ENCODE measurements at regions of chr20 and their contacts with region 1.

Region 1: DNA sequence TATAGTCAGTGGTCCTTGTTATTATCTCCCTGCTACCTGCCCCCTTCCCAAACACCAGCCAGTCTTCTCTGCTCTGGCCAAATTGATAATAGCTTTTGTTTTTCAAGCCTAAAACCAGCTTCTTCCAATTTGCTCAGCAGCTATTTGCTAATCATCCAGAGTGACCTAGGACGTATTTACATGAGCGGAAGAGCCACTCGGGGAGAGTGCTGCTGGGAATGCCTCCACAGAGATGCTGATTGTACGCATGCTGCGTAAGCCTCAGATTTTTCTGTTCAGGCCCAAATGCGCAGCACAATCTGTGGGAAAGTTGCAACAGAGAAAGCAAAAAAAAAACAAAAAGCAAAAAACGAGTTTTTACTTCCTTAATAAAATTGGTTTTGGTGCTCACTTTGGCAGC is 24.4 kb upstream of the ID1 start:
- DNase-seq: no peak
- H3K4me3 ChIP-seq: no peak overlapping the region
- H3K4me3 Mint-ChIP-seq: no peak overlapping the region
- H3K27ac Mint-ChIP-seq: peak overlapping the region; percentile 4
- H3K4me1 ChIP-seq: no peaks in the 10 kb centered on the region
- H3K4me1 Mint-ChIP-seq: peaks cover 14% of the 10 kb centered on the region
- H3K27me3 ChIP-seq: no peaks in the 10 kb centered on the region
- H3K27me3 Mint-ChIP-seq: no peaks in the 10 kb centered on the region
- CTCF ChIP-seq: no peak

Region 2: GRCh38 chr20:31368301-31368700 is 212.4 kb before region 1 on chr20 and contains the start of gene DEFB118:
- CTCF ChIA-PET with region 1: no interaction called
- POLR2A ChIA-PET with region 1: no interaction called
- intact Hi-C with region 1: no loop called
- DNase-seq: no peak
- H3K4me3 ChIP-seq: no peak within 1 kb of the TSS
- H3K4me3 Mint-ChIP-seq: no peak within 1 kb of the TSS
- H3K27ac Mint-ChIP-seq: no peak within 1 kb of the TSS
- H3K4me1 ChIP-seq: no peaks in the 10 kb centered on the region
- H3K4me1 Mint-ChIP-seq: no peaks in the 10 kb centered on the region
- H3K27me3 ChIP-seq: no peaks in the 10 kb centered on the region
- H3K27me3 Mint-ChIP-seq: peaks cover 19% of the 10 kb centered on the region
- CTCF ChIP-seq: no peak
- total RNA-seq, gene DEFB118: not detected in 2 replicates

Region 3: GRCh38 chr20:31644701-31645100 is 64.0 kb after region 1 on chr20:
- CTCF ChIA-PET with region 1: no interaction called
- POLR2A ChIA-PET with region 1: no interaction called
- intact Hi-C with region 1: no loop called
- DNase-seq: no peak
- H3K4me3 ChIP-seq: no peak overlapping the region
- H3K4me3 Mint-ChIP-seq: no peak overlapping the region
- H3K27ac Mint-ChIP-seq: no peak overlapping the region
- H3K4me1 ChIP-seq: no peaks in the 10 kb centered on the region
- H3K4me1 Mint-ChIP-seq: no peaks in the 10 kb centered on the region
- H3K27me3 ChIP-seq: no peaks in the 10 kb centered on the region
- H3K27me3 Mint-ChIP-seq: no peaks in the 10 kb centered on the region
- CTCF ChIP-seq: no peak

Region 4: GRCh38 chr20:31894980-31895675 is 314.4 kb after region 1 on chr20:
- CTCF ChIA-PET with region 1: no interaction called
- POLR2A ChIA-PET with region 1: interaction called, 17 read pairs
- intact Hi-C with region 1: no loop called
- DNase-seq: peak; percentile 38 to 53
- H3K4me3 ChIP-seq: no peak overlapping the region
- H3K4me3 Mint-ChIP-seq: no peak overlapping the region
- H3K27ac Mint-ChIP-seq: no peak overlapping the region
- H3K4me1 ChIP-seq: no peaks in the 10 kb centered on the region
- H3K4me1 Mint-ChIP-seq: no peaks in the 10 kb centered on the region
- H3K27me3 ChIP-seq: peaks cover 2% of the 10 kb centered on the region
- H3K27me3 Mint-ChIP-seq: peaks cover 10% of the 10 kb centered on the region
- CTCF ChIP-seq: no peak

Measured in Caco-2 (cell line).